ENCODE measurements at regions of chr2 and their contacts with region 1.

Region 1: GRCh38 chr2:174644401-174644800 is 46.8 kb upstream of the WIPF1 start:
- DNase-seq: no peak
- ATAC-seq: no peak
- H3K4me3 ChIP-seq: no peak overlapping the region
- H3K4me3 Mint-ChIP-seq: no peak overlapping the region
- H3K27ac ChIP-seq: no peak overlapping the region
- H3K27ac Mint-ChIP-seq: no peak overlapping the region
- H3K4me1 ChIP-seq: no peaks in the 10 kb centered on the region
- H3K4me1 Mint-ChIP-seq: peaks cover 6 to 29% (median 12%) of the 10 kb centered on the region in 3 donors
- H3K27me3 ChIP-seq: no peaks in the 10 kb centered on the region
- H3K27me3 Mint-ChIP-seq: no peaks in the 10 kb centered on the region

Region 2: GRCh38 chr2:174634130-174635014 is 10.0 kb before region 1 on chr2:
- CTCF ChIA-PET with region 1: no interaction called
- POLR2A ChIA-PET with region 1: interaction called, 9 to 11 read pairs
- DNase-seq: peak in 33 of 35 experiments; percentile 12 to 75 (median 34)
- ATAC-seq: peak; percentile 73 to 83 (median 77)
- H3K4me3 ChIP-seq: peak overlapping the region; percentile 66 to 81
- H3K4me3 Mint-ChIP-seq: peak overlapping the region; percentile 87 to 93 (median 89)
- H3K27ac ChIP-seq: peak overlapping the region; percentile 94
- H3K27ac Mint-ChIP-seq: peak overlapping the region; percentile 93 to 99
- H3K4me1 ChIP-seq: peaks cover 30 to 46% of the 10 kb centered on the region in 2 experiments
- H3K4me1 Mint-ChIP-seq: peaks cover 60 to 83% (median 75%) of the 10 kb centered on the region in 3 donors
- H3K27me3 ChIP-seq: no peaks in the 10 kb centered on the region
- H3K27me3 Mint-ChIP-seq: no peaks in the 10 kb centered on the region

Measured in T-cell (primary cell).